Activated CD4-positive, alpha-beta memory T cell treated with anti-CD3 and anti-CD28 coated beads, Interleukin-2, amount 10 ng/mL, durations not matched to agents 7 days and 5 days (primary cell): ENCODE measurements at regions of chr16 and their contacts with region 1.

Region 1: GRCh38 chr16:2867987-2868789 is 10.2 kb upstream of the PRSS22 start:
- DNase-seq: peak; percentile 96
- H3K4me3 Mint-ChIP-seq: peak overlapping the region; percentile 82
- H3K27ac Mint-ChIP-seq: peak overlapping the region; percentile 84
- H3K4me1 Mint-ChIP-seq: peaks cover 24% of the 10 kb centered on the region
- H3K27me3 Mint-ChIP-seq: peaks cover 7% of the 10 kb centered on the region

Region 2: DNA sequence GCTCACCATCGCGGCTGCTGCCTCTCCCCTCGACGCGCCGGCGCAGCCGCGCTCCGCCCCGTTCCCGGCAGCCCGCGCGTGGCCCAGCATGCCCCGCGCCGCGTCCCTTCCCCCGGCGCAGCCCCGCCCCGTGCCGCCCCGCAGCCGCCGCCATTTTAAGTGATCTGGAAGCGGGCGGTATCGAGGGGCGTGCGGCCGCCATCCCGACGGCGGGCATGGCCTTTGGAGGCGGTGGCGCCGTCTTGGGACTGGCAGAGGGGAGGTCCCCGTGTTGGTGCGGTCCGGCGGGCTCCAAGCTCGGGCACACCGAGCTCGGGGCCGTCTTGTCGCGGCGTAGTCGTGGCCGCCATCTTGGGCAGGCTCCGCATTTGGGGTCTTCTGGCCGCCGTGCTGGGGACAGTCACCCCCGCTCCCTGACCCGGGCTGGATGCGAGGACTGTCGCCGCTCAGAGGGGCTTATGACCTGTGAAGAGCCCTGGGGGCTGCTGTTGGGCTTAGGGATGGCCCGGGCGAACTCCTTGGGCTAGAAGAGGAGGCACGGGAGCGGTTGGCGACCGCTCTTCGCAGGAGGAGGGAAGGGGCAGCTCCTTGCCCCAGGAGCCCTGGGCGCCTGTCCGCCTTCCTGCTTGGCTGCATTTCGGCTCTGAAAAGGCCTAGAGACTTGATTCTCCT is 90.8 kb before region 1 on chr16 and contains the start of gene ELOB:
- CTCF ChIA-PET with region 1: interaction called, 14 read pairs
- POLR2A ChIA-PET with region 1: interaction called, 24 read pairs
- DNase-seq: peak; percentile 92
- H3K4me3 Mint-ChIP-seq: peak within 1 kb of the TSS; percentile 88
- H3K27ac Mint-ChIP-seq: peak within 1 kb of the TSS; percentile 96
- H3K4me1 Mint-ChIP-seq: peaks cover 25% of the 10 kb centered on the region
- H3K27me3 Mint-ChIP-seq: no peaks in the 10 kb centered on the region
- total RNA-seq, gene ELOB: 141 to 150 TPM

Region 3: GRCh38 chr16:2810651-2811050 is 57.5 kb before region 1 on chr16:
- CTCF ChIA-PET with region 1: no interaction called
- POLR2A ChIA-PET with region 1: no interaction called
- DNase-seq: no peak
- H3K4me3 Mint-ChIP-seq: no peak overlapping the region
- H3K27ac Mint-ChIP-seq: no peak overlapping the region
- H3K4me1 Mint-ChIP-seq: no peaks in the 10 kb centered on the region
- H3K27me3 Mint-ChIP-seq: peaks cover 31% of the 10 kb centered on the region

Region 4: DNA sequence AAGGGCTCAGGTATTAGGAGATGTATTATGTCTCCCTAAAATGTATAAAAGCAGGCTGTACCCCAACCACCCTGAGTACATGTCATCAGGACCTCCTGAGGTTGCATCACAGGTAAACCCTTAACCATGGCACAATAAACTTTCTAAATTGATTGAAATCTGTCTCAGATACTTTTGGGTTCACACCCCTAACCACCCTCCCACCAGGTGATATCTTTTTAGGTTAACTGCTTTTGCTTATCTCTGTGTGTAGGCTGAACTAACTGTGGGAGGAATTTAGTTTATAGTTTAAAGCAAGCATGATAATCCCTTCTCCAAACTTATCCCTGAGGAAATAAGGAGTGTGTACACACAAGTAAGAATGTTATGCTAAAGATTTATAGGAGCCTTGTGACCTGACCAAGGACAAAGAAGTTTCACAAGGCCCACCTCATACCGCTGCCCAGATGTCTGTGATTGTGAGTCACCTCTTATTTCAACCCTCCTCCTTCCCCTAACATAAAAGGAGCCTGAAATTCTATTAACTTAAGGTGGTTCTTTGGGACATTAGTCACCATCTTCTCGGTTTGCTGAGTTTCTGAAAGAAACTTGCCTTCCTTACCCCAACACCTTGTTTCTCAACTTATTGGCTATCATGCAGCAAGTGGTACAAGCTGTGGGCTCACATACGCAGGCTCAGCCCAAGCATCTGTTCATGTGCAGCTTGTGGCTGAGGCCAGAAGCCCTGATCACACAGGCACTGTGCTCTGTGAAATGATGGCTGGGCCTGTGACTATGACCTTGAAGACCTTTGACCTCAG is 21.5 kb before region 1 on chr16:
- CTCF ChIA-PET with region 1: interaction called, 22 read pairs
- POLR2A ChIA-PET with region 1: interaction called, 4 read pairs
- DNase-seq: no peak
- H3K4me3 Mint-ChIP-seq: no peak overlapping the region
- H3K27ac Mint-ChIP-seq: peak overlapping the region; percentile 27
- H3K4me1 Mint-ChIP-seq: peaks cover 29% of the 10 kb centered on the region
- H3K27me3 Mint-ChIP-seq: peaks cover 8% of the 10 kb centered on the region

Region 5: GRCh38 chr16:2883027-2883851 is 15.1 kb after region 1 on chr16 and contains the start of gene FLYWCH2:
- CTCF ChIA-PET with region 1: interaction called, 30 read pairs
- POLR2A ChIA-PET with region 1: interaction called, 29 read pairs
- DNase-seq: peak; percentile 100
- H3K4me3 Mint-ChIP-seq: peak within 1 kb of the TSS; percentile 84
- H3K27ac Mint-ChIP-seq: peak within 1 kb of the TSS; percentile 89
- H3K4me1 Mint-ChIP-seq: peaks cover 19% of the 10 kb centered on the region
- H3K27me3 Mint-ChIP-seq: no peaks in the 10 kb centered on the region
- total RNA-seq, gene FLYWCH2: 19.4 to 20.5 TPM

Region 6: GRCh38 chr16:2911580-2912329 is 43.6 kb after region 1 on chr16 and contains the start of gene FLYWCH1:
- CTCF ChIA-PET with region 1: interaction called, 18 read pairs
- POLR2A ChIA-PET with region 1: interaction called, 13 read pairs
- DNase-seq: peak; percentile 99
- H3K4me3 Mint-ChIP-seq: peak within 1 kb of the TSS; percentile 96
- H3K27ac Mint-ChIP-seq: peak within 1 kb of the TSS; percentile 88
- H3K4me1 Mint-ChIP-seq: peaks cover 52% of the 10 kb centered on the region
- H3K27me3 Mint-ChIP-seq: peaks cover 6% of the 10 kb centered on the region
- total RNA-seq, gene FLYWCH1: 75.2 to 80.8 TPM

Region 7: GRCh38 chr16:2926650-2927646 is 58.8 kb after region 1 on chr16:
- CTCF ChIA-PET with region 1: interaction called, 23 read pairs
- POLR2A ChIA-PET with region 1: interaction called, 4 read pairs
- DNase-seq: peak; percentile 90
- H3K4me3 Mint-ChIP-seq: no peak overlapping the region
- H3K27ac Mint-ChIP-seq: no peak overlapping the region
- H3K4me1 Mint-ChIP-seq: peaks cover 17% of the 10 kb centered on the region
- H3K27me3 Mint-ChIP-seq: no peaks in the 10 kb centered on the region

Region 8: GRCh38 chr16:3059000-3059722 is 191.0 kb after region 1 on chr16:
- CTCF ChIA-PET with region 1: no interaction called
- POLR2A ChIA-PET with region 1: no interaction called
- DNase-seq: peak; percentile 90
- H3K4me3 Mint-ChIP-seq: peak overlapping the region; percentile 79
- H3K27ac Mint-ChIP-seq: peak overlapping the region; percentile 95
- H3K4me1 Mint-ChIP-seq: peaks cover 74% of the 10 kb centered on the region
- H3K27me3 Mint-ChIP-seq: no peaks in the 10 kb centered on the region